B cell (primary cell): ENCODE measurements at regions of chr6 and their contacts with region 1.

Region 1: DNA sequence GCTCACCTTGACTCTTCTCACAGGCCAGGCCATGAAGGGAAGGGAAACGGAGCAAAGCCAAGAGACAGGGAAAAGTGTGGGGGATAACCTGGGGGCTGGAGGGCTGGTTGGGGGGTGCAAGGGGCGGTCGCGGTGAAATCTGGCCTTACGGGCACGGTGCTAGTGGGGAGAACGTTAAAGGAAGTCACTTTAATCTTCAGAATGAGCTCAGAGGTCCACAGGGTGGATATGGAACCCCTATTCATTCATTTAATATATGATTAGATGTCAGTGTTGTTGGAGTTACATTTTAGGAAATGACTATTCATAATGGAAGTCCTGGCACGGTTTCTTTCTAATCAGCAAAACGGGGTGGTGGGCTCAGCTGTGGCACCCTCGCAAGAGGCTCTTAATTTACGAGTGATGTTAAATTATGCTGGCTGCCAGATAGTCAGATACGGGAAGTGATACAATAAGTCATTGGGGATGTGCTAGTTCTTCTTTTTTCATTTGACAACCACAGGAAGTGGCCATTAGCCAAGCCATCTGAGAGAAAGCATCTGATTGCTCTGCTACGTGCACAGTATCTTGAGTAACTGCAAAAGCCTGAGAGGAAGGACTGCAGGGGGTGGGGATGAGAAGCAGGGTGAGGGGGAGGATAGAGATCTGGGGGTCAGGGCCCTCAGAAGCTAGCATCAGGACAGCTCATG is 253.0 kb downstream of the QKI start:
- DNase-seq: peak; percentile 87
- ATAC-seq: peak; percentile 93
- H3K4me3 ChIP-seq: peak overlapping the region in 3 of 5 experiments; percentile 35 to 55 (median 37)
- H3K4me3 Mint-ChIP-seq: peak overlapping the region; percentile 73
- H3K27ac ChIP-seq: peak overlapping the region; percentile 49 to 61
- H3K27ac Mint-ChIP-seq: peak overlapping the region; percentile 94
- H3K4me1 ChIP-seq: peaks cover 38 to 57% of the 10 kb centered on the region in 2 donors
- H3K4me1 Mint-ChIP-seq: peaks cover 42% of the 10 kb centered on the region
- H3K27me3 ChIP-seq: no peaks in the 10 kb centered on the region
- H3K27me3 Mint-ChIP-seq: no peaks in the 10 kb centered on the region
- CTCF ChIP-seq: no peak

Region 2: GRCh38 chr6:163612200-163612599 is 55.3 kb before region 1 on chr6:
- CTCF ChIA-PET with region 1: no interaction called
- POLR2A ChIA-PET with region 1: no interaction called
- intact Hi-C with region 1: no loop called
- DNase-seq: no peak
- ATAC-seq: no peak
- H3K4me3 ChIP-seq: no peak overlapping the region
- H3K4me3 Mint-ChIP-seq: no peak overlapping the region
- H3K27ac ChIP-seq: no peak overlapping the region
- H3K27ac Mint-ChIP-seq: no peak overlapping the region
- H3K4me1 ChIP-seq: no peaks in the 10 kb centered on the region
- H3K4me1 Mint-ChIP-seq: peaks cover 8% of the 10 kb centered on the region
- H3K27me3 ChIP-seq: peaks cover 0 to 4% (median 0%) of the 10 kb centered on the region in 4 experiments
- H3K27me3 Mint-ChIP-seq: no peaks in the 10 kb centered on the region
- CTCF ChIP-seq: no peak

Region 3: DNA sequence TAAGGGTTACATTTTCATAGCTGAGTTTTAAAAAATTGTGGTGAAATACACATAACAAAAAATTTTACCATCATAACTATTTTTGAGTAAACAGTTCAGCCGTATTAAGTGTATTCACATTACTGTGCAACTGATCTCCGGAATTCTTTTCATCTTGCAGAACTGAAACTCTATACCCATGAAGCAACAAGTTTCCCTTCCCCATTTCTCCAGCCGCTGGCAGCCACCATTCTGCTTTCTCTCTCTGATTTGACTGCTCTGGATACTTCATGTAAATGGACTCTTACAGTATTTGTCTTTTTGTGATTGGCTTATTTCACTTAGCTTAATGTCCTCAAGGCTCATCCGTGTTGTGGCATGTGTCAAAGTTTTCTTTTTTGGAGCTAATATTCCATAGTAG is 88.6 kb after region 1 on chr6:
- CTCF ChIA-PET with region 1: no interaction called
- POLR2A ChIA-PET with region 1: interaction called, 3 read pairs
- intact Hi-C with region 1: loop called (anchors 1 kb)
- DNase-seq: peak; percentile 88
- ATAC-seq: peak; percentile 98
- H3K4me3 ChIP-seq: no peak overlapping the region
- H3K4me3 Mint-ChIP-seq: peak overlapping the region; percentile 61
- H3K27ac ChIP-seq: no peak overlapping the region
- H3K27ac Mint-ChIP-seq: peak overlapping the region; percentile 43
- H3K4me1 ChIP-seq: peaks cover 27 to 35% of the 10 kb centered on the region in 2 donors
- H3K4me1 Mint-ChIP-seq: peaks cover 39% of the 10 kb centered on the region
- H3K27me3 ChIP-seq: peaks cover 0 to 11% (median 3%) of the 10 kb centered on the region in 4 experiments
- H3K27me3 Mint-ChIP-seq: peaks cover 11% of the 10 kb centered on the region
- CTCF ChIP-seq: no peak

Region 4: DNA sequence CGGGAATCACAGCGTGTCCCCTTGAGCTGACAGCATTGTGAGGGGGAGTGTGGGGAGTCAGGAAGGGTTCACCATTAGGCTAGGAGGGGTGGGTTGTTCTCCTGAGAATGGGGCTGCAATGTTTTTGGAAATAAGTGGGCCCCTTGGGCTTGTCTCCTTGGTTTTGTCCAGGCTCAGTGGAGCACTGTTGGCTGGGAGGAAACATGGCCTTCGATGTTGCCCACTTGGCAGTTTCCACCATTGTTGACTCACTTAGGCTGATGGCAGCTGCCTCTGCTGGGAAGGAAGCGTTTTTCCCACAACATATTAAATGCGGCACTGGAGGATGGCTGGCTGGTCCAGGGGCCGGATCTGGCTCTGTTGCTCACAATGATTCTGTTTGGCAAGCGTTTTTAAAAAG is 259.1 kb after region 1 on chr6:
- CTCF ChIA-PET with region 1: no interaction called
- POLR2A ChIA-PET with region 1: no interaction called
- intact Hi-C with region 1: no loop called
- DNase-seq: no peak
- ATAC-seq: no peak
- H3K4me3 ChIP-seq: no peak overlapping the region
- H3K4me3 Mint-ChIP-seq: no peak overlapping the region
- H3K27ac ChIP-seq: no peak overlapping the region
- H3K27ac Mint-ChIP-seq: no peak overlapping the region
- H3K4me1 ChIP-seq: no peaks in the 10 kb centered on the region
- H3K4me1 Mint-ChIP-seq: no peaks in the 10 kb centered on the region
- H3K27me3 ChIP-seq: no peaks in the 10 kb centered on the region
- H3K27me3 Mint-ChIP-seq: no peaks in the 10 kb centered on the region
- CTCF ChIP-seq: no peak